ENCODE measurements at regions of chr6 and their contacts with region 1.

Region 1: DNA sequence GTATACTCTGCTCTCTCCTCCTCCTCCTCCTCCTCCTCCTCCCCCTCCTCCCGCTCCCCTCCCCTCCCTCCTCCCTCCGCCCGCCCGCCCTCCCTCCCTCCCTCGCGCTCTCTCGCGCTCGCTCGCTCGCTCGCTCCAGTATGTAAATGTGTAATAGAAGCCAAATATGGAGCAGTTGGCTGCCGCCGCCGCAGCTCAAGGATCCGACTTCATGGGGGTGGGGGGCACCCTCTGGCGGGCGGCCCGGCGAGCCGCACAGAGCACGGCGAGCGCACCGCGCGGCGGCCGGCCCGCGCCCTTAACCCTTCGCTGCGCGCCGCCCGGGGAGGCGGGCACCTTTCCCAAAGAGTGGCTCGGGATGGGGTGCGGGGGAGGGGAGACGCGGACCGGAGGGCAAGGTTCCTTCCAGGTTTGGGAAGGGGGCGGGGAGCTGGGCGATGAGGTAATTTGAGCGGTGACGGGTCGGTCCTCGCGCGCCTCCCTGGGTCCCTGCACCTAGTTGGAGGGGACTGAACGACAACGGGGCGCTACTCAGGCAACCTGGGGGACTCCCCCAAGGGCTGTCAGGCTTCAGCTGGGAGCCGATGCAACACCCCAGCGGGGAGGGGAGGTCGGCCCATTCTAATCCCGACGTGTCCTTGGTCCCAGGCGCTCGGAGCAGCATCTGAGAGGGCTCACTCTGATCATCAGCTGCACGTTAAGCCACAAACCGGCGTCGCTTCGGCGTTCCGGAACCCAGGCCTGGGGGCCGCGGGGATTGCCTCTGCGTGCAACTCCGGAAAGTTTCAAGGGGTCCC is 409 bp upstream of the ATXN1 start:
- DNase-seq: peak; percentile 66 to 94 (median 80)

Region 2: DNA sequence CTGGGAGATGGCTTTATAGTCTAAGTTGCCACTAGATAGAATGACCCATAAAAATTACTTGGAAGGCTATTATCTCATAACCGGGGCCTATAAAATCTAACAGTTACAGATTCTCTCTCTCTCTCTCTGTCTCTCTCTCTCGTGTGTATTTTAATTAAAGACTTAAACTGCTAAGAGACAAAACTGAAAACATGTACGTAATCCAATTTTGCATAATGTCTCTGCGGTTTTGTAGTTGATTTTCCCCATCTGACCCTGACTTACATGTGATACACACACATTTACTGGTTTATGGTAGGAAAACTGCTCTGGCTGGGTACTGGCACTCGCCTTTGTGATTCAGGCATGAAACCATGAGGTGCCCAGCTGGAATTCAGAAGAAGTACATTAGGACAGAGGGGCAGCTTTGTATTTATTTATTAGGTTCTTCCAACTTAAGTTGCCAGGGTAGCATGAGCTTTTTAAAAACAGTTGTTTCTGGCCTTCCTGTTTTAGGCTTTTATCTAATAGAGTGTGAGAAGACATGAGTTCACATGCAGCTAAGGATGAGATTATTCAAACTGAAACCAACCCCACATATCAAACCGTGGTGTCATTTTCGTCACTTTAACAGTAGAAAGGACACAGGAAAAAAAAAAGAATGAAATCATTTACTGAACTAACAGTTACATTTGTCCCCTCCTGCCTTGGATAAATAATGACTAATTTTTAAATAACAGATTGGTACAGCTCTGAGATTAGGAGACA is 340.8 kb before region 1 on chr6:
- intact Hi-C with region 1: loop called (anchors 10 kb)
- DNase-seq: peak in 1 of 42 donors; percentile 31

Region 3: GRCh38 chr6:16514249-16514648 is 247.4 kb before region 1 on chr6:
- intact Hi-C with region 1: loop called (anchors 5 kb)
- DNase-seq: peak in 33 of 42 donors; percentile 10 to 75 (median 48)

Region 4: DNA sequence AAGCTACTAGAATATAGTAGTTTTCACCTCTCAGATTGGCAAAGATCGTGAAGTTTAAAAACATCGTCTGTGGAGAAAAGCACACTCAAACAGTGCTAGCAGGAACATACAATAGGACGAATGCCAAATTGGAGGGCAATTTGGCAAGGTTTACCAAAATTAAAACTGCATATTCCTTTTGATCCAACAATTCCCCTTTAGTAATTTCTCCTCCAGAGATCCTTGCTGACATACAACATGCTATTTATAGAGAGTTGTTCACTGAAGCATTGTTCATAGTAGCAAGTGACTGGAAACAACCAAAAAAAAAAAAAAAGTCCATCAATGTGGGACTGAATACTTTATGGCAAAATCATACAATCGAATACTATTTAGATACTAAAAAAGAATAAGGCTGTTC is 202.6 kb before region 1 on chr6:
- intact Hi-C with region 1: loop called (anchors 5 kb)
- DNase-seq: no peak

Region 5: GRCh38 chr6:16712931-16713484 is 48.7 kb before region 1 on chr6:
- intact Hi-C with region 1: no loop called
- DNase-seq: peak in 10 of 42 donors; percentile 18 to 70 (median 40)

Region 6: DNA sequence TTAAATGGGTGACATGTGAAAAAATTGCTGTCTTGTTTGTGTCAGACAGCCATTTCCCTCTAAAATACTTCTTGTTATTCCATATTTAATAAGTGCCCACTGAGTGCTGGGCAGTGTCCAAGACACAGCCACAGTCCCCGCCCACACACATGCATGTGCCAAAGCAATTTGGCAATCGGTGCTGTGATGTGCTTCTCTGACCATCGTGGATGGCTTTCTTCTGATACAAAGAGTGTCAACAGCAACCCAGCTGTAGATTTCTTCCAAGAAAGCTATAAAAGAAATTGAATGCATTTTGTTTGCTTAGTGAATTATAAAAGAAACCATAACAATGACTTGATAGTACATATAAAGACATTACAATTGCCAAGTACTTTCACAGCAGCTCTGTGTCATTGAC is 140.1 kb after region 1 on chr6:
- intact Hi-C with region 1: no loop called
- DNase-seq: peak in 12 of 42 donors; percentile 8 to 44 (median 18)